ENCODE measurements at regions of chr15 and their contacts with region 1.

Region 1: GRCh38 chr15:90931737-90932659 is at the start of gene HDDC3:
- DNase-seq: peak; percentile 77 to 93 (median 88)
- H3K4me3 ChIP-seq: peak within 1 kb of the TSS; percentile 63 to 100 (median 83)
- H3K27ac ChIP-seq: peak within 1 kb of the TSS; percentile 75 to 98 (median 93)
- H3K27me3 ChIP-seq: no peaks in the 10 kb centered on the region
- CTCF ChIP-seq: peak; percentile 72 to 97 (median 93)
- total RNA-seq, gene HDDC3: 8.6 to 40.8 (median 20.2) TPM

Region 2: GRCh38 chr15:90648137-90649070 is 283.6 kb before region 1 on chr15:
- intact Hi-C with region 1: loop called (anchors 5 kb)
- DNase-seq: peak in 4 of 10 donors; percentile 41 to 74 (median 62)
- H3K4me3 ChIP-seq: no peak overlapping the region
- H3K27ac ChIP-seq: peak overlapping the region in 16 of 59 donors; percentile 16 to 66 (median 48)
- H3K27me3 ChIP-seq: no peaks in the 10 kb centered on the region
- CTCF ChIP-seq: peak; percentile 79 to 97 (median 91)

Region 3: GRCh38 chr15:90716976-90717821 is 214.8 kb before region 1 on chr15 and contains the start of gene BLM:
- intact Hi-C with region 1: loop called in 1 of 2 experiments (anchors 10 kb)
- DNase-seq: peak; percentile 90 to 97 (median 97)
- H3K4me3 ChIP-seq: peak within 1 kb of the TSS; percentile 50 to 95 (median 81)
- H3K27ac ChIP-seq: peak within 1 kb of the TSS; percentile 40 to 96 (median 91)
- H3K27me3 ChIP-seq: no peaks in the 10 kb centered on the region
- CTCF ChIP-seq: peak in 51 of 56 donors; percentile 19 to 69 (median 53)
- total RNA-seq, gene BLM: 1.9 to 12.9 (median 5.7) TPM

Region 4: GRCh38 chr15:90902040-90902839 is 29.8 kb before region 1 on chr15:
- intact Hi-C with region 1: loop called (anchors 1 to 2 kb)
- DNase-seq: peak; percentile 63 to 85 (median 75)
- H3K4me3 ChIP-seq: peak overlapping the region; percentile 54 to 94 (median 82)
- H3K27ac ChIP-seq: peak overlapping the region; percentile 87 to 100 (median 98)
- H3K27me3 ChIP-seq: no peaks in the 10 kb centered on the region
- CTCF ChIP-seq: peak; percentile 50 to 90 (median 78)

Region 5: GRCh38 chr15:90915808-90916440 is 16.1 kb before region 1 on chr15:
- intact Hi-C with region 1: loop called in 1 of 2 experiments (anchors 2 kb)
- DNase-seq: no peak
- H3K4me3 ChIP-seq: peak overlapping the region in 1 of 59 donors; percentile 5
- H3K27ac ChIP-seq: peak overlapping the region in 23 of 59 donors; percentile 3 to 62 (median 31)
- H3K27me3 ChIP-seq: no peaks in the 10 kb centered on the region
- CTCF ChIP-seq: no peak

Region 6: GRCh38 chr15:90970274-90970673 is 38.3 kb after region 1 on chr15:
- intact Hi-C with region 1: no loop called
- DNase-seq: no peak
- H3K4me3 ChIP-seq: no peak overlapping the region
- H3K27ac ChIP-seq: no peak overlapping the region
- H3K27me3 ChIP-seq: no peaks in the 10 kb centered on the region
- CTCF ChIP-seq: no peak